ENCODE measurements at regions of chr15 and their contacts with region 1.

Region 1: DNA sequence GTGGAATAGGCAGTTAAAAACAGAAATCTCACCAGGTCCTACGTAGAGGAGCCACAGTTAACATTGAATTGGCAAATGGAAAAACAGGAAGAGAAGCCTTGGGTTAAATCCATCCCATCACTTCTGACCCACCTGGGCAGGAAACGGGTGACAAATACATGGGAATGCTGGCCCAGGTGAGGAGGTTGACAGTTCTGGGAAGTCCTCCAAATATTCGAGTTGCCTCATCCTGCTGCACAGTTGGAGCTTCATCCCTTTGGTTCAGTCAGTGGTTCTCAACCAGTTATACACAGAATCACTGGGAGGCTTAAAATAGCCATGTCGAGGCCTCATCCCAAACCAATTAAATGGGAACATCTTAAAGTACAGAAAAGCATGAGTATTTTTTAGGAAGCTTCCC is 5.3 kb downstream of the MYZAP start:
- DNase-seq: no peak
- ATAC-seq: peak in 1 of 4 donors; percentile 12
- H3K4me3 ChIP-seq: peak overlapping the region in 1 of 12 donors; percentile 6
- H3K27ac ChIP-seq: peak overlapping the region; percentile 74 to 96 (median 92)
- H3K4me1 ChIP-seq: peaks cover 0 to 54% (median 32%) of the 10 kb centered on the region in 12 donors
- H3K27me3 ChIP-seq: no peaks in the 10 kb centered on the region
- CTCF ChIP-seq: no peak
- POLR2A ChIP-seq: no peak

Region 2: DNA sequence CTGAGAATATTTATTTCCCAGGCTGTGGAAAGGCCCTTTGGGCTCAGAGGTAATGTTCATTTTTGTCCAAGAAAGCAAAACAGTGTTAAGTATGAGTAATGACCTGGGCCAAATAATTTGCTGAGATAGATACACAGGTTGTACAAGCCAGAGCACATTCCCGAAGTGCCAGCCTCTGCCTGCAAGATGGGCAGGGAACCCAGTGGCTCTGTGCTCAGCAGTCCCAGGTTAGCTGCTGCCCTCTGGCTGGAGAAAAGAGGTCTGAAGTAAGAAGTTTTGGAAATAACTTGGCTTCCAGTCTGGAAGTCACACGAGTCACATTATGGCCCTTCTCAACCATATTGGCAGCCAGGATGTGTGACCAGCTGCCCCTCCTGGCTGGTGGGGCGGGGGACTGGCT is 15.0 kb after region 1 on chr15:
- intact Hi-C with region 1: loop called in 1 of 10 experiments (anchors 1 kb)
- DNase-seq: peak in 2 of 5 donors; percentile 54 to 67
- ATAC-seq: peak; percentile 34 to 73 (median 42)
- H3K4me3 ChIP-seq: no peak overlapping the region
- H3K27ac ChIP-seq: peak overlapping the region; percentile 69 to 96 (median 82)
- H3K4me1 ChIP-seq: peaks cover 5 to 82% (median 40%) of the 10 kb centered on the region in 12 donors
- H3K27me3 ChIP-seq: no peaks in the 10 kb centered on the region
- CTCF ChIP-seq: peak; percentile 9 to 59 (median 42)
- POLR2A ChIP-seq: no peak

Region 3: DNA sequence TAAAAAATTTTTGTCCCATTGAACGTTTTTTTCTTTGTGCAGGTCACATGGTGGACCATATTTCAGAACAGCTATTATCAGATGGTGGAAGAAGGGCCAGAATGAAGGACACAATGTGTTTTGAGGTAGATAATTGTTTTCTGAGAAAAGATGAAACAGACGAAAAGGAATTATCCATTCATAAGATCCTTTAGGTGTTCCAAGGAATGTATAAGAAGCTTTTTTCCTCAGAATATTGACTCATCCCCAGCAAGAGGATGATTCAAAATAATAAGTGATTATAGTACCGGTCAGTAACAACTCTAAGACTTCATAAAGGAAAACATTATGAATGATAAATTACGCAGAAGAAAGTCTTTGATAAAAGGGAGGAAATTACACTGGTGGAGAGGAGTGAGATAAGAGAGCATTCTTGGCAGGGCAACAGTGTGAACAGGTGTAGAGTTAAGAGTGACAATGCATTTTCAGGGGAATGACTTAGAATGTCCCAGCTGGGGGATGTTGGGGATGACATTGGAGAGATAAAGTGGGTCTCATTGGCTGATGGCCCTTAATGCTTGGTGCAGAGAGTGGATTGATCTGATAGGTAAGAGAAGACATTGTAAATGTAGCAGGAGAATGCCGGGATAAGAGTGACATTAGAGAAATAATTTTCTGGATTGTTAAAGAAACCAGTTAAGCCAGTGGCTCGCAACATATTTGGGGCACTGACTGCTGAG is 514.2 kb after region 1 on chr15:
- intact Hi-C with region 1: no loop called
- DNase-seq: no peak
- ATAC-seq: no peak
- H3K4me3 ChIP-seq: no peak overlapping the region
- H3K27ac ChIP-seq: no peak overlapping the region
- H3K4me1 ChIP-seq: no peaks in the 10 kb centered on the region
- H3K27me3 ChIP-seq: peaks cover 0 to 21% (median 0%) of the 10 kb centered on the region in 9 donors
- CTCF ChIP-seq: no peak
- POLR2A ChIP-seq: no peak